Activated T-helper 2 cell treated with anti-CD3 and anti-CD28 coated beads, Interferon-gamma antibody, Interleukin-2, Interleukin-4, amounts not matched to agents 10 μg/mL and 5 μg/mL and 100 μg/mL, durations not matched to agents 14 hours and 24 hours and 36 hours (primary cell): ENCODE measurements at regions of chr11 and their contacts with region 1.

Region 1: GRCh38 chr11:71928737-71929452 is at the start of gene RNF121:
- DNase-seq: peak; percentile 97
- H3K4me3 Mint-ChIP-seq: peak within 1 kb of the TSS; percentile 91
- H3K27ac Mint-ChIP-seq: peak within 1 kb of the TSS; percentile 99
- H3K4me1 Mint-ChIP-seq: peaks cover 32% of the 10 kb centered on the region
- H3K27me3 Mint-ChIP-seq: no peaks in the 10 kb centered on the region
- total RNA-seq, gene RNF121: 49.1 and 51.3 TPM in 2 replicates

Region 2: GRCh38 chr11:71913756-71914526 is 15.0 kb before region 1 on chr11:
- intact Hi-C with region 1: loop called (anchors 1 kb)
- DNase-seq: no peak
- H3K4me3 Mint-ChIP-seq: no peak overlapping the region
- H3K27ac Mint-ChIP-seq: peak overlapping the region; percentile 74
- H3K4me1 Mint-ChIP-seq: peaks cover 37% of the 10 kb centered on the region
- H3K27me3 Mint-ChIP-seq: no peaks in the 10 kb centered on the region

Region 3: GRCh38 chr11:71946144-71946571 is 17.3 kb after region 1 on chr11:
- intact Hi-C with region 1: loop called (anchors 1 kb)
- DNase-seq: no peak
- H3K4me3 Mint-ChIP-seq: no peak overlapping the region
- H3K27ac Mint-ChIP-seq: peak overlapping the region; percentile 75
- H3K4me1 Mint-ChIP-seq: peaks cover 17% of the 10 kb centered on the region
- H3K27me3 Mint-ChIP-seq: no peaks in the 10 kb centered on the region

Region 4: GRCh38 chr11:71962428-71963038 is 33.6 kb after region 1 on chr11:
- intact Hi-C with region 1: loop called (anchors 1 kb)
- DNase-seq: no peak
- H3K4me3 Mint-ChIP-seq: peak overlapping the region; percentile 17
- H3K27ac Mint-ChIP-seq: peak overlapping the region; percentile 82
- H3K4me1 Mint-ChIP-seq: peaks cover 24% of the 10 kb centered on the region
- H3K27me3 Mint-ChIP-seq: no peaks in the 10 kb centered on the region